Naive thymus-derived CD4-positive, alpha-beta T cell (primary cell): ENCODE measurements at regions of chr19 and their contacts with region 1.

Region 1: DNA sequence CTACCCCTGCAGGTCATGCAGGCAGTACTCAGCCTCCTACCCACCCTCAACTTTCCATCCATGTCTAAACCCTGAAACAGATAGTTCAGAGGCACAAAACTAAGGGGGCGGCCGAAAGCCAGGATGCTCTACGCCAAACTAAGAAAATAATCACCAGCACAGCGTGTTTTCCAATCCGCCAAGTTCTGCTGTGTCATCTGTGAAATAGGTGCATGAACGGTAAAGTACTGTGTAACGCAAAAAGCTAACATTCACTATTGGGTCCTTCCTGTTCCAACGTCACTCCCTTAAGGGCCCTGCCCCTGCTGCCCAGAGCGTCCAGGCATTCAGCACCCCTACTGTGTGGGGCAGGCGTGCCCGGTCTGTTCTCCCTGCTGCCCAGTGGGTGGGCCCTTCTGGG is 12.2 kb upstream of the TIMM44 start:
- DNase-seq: no peak
- ATAC-seq: no peak
- H3K4me3 ChIP-seq: no peak overlapping the region
- H3K4me3 Mint-ChIP-seq: no peak overlapping the region
- H3K27ac ChIP-seq: no peak overlapping the region
- H3K27ac Mint-ChIP-seq: no peak overlapping the region
- H3K4me1 ChIP-seq: no peaks in the 10 kb centered on the region
- H3K4me1 Mint-ChIP-seq: peaks cover 0 to 5% (median 0%) of the 10 kb centered on the region in 7 donors
- H3K27me3 ChIP-seq: no peaks in the 10 kb centered on the region
- H3K27me3 Mint-ChIP-seq: no peaks in the 10 kb centered on the region

Region 2: GRCh38 chr19:7994114-7994513 is 38.4 kb after region 1 on chr19:
- CTCF ChIA-PET with region 1: no interaction called
- POLR2A ChIA-PET with region 1: no interaction called
- intact Hi-C with region 1: loop called in 1 of 2 experiments (anchors 5 kb)
- DNase-seq: no peak
- ATAC-seq: no peak
- H3K4me3 ChIP-seq: no peak overlapping the region
- H3K4me3 Mint-ChIP-seq: no peak overlapping the region
- H3K27ac ChIP-seq: no peak overlapping the region
- H3K27ac Mint-ChIP-seq: peak overlapping the region in 3 of 9 donors; percentile 49 to 75 (median 65)
- H3K4me1 ChIP-seq: peaks cover 0 to 4% of the 10 kb centered on the region in 2 donors
- H3K4me1 Mint-ChIP-seq: peaks cover 16 to 56% (median 43%) of the 10 kb centered on the region in 7 donors
- H3K27me3 ChIP-seq: no peaks in the 10 kb centered on the region
- H3K27me3 Mint-ChIP-seq: no peaks in the 10 kb centered on the region

Region 3: DNA sequence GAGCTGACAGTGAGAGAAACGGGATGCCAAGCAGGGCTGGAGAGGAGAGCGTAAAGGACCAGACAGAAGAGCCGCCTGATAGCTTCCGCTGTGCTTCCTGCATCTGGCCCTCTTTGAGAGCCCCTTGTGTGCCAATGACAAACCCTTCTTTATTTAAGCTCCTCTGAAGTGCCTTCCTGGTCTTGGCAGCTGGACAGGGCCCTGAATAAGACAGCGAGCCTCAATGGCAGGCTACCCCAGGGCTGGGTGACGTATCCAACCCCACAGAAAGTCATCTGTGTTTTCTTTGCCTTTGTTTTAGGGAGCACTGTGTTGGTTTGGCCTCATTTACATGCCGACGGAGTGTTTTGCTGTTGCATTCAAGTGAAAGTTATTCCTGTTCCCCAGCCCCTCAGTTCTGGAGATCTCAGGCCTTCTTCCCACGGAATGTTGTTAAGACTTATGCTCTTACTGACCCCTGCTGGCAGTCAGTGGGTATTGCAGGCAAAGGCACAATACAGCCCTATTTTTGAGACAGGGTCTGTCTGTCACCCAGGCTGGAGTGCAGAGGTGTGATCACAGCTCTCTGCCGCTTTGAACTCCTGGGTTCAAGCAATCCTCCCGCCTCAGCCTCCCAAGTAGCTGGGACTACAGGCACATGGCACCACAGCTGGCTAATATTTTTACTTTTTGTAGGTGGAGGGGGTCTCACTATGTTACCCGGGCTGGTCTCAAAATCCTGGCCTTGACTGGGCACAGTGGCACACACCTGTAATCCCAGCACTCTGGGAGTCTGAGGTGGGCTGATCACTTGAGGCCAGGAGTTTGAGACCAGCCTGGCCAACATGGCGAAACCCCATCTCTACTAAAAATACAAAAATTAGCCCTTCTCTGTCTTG is 113.6 kb after region 1 on chr19:
- CTCF ChIA-PET with region 1: no interaction called
- POLR2A ChIA-PET with region 1: no interaction called
- intact Hi-C with region 1: no loop called
- DNase-seq: no peak
- ATAC-seq: no peak
- H3K4me3 ChIP-seq: no peak overlapping the region
- H3K4me3 Mint-ChIP-seq: no peak overlapping the region
- H3K27ac ChIP-seq: no peak overlapping the region
- H3K27ac Mint-ChIP-seq: peak overlapping the region in 1 of 9 donors; percentile 30
- H3K4me1 ChIP-seq: peaks cover 0 to 4% of the 10 kb centered on the region in 2 donors
- H3K4me1 Mint-ChIP-seq: peaks cover 0 to 10% (median 4%) of the 10 kb centered on the region in 7 donors
- H3K27me3 ChIP-seq: no peaks in the 10 kb centered on the region
- H3K27me3 Mint-ChIP-seq: peaks cover 0 to 5% (median 0%) of the 10 kb centered on the region in 5 donors